ENCODE measurements at regions of chr10 and their contacts with region 1.

Region 1: GRCh38 chr10:3197348-3198003 is 24.9 kb upstream of the PITRM1 start:
- H3K4me3 ChIP-seq: peak overlapping the region; percentile 27
- H3K27ac ChIP-seq: peak overlapping the region; percentile 74
- H3K4me1 ChIP-seq: peaks cover 6% of the 10 kb centered on the region; the same call in 1 of the 2 replicates
- CTCF ChIP-seq: peak; percentile 87

Region 2: DNA sequence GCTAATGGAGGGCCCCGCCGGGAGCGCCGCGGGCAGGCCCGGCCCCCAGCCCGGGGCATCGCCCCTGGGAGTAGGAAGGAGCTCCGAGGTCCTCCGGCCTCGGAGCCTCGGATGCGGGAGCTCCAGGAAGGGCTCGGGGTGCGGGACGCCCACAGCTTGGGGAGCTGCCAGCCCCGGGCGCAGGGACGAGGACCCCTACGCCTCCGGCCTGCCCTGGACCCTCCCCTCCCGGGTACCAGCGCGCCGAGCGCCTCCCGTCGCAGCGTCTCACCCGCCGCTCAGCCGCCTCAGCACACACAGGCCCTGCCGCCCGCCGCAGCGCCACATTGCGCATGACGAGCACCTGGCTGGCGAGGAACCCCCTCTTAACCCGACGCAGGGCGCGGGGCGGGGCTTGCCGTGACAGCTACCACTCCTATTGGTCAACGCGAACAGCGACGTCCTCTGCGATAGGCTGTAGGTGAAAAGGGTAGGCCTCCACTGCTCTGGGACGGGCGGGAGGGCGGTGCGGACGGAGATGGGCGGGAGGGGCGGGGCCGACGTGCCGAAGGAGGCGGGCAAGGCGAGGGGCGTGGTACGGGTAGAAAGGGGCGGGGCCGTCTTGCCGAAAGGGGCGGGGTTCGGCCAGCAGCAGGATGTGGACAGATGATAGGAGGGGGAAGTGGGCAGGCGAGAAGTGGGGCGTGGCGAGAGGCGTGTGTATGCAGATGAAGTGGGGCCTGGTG is 24.9 kb before region 1 on chr10 and contains the start of gene PITRM1:
- CTCF ChIA-PET with region 1: interaction called, 4 read pairs
- POLR2A ChIA-PET with region 1: interaction called, 10 read pairs
- H3K4me3 ChIP-seq: peak within 1 kb of the TSS; percentile 77
- H3K27ac ChIP-seq: peak within 1 kb of the TSS; percentile 75
- H3K4me1 ChIP-seq: no peaks in the 10 kb centered on the region
- CTCF ChIP-seq: peak; percentile 60; the same call in 1 of the 2 replicates

Region 3: GRCh38 chr10:3226960-3227744 is 29.7 kb after region 1 on chr10:
- CTCF ChIA-PET with region 1: interaction called, 5 read pairs
- POLR2A ChIA-PET with region 1: interaction called, 13 read pairs
- H3K4me3 ChIP-seq: no peak overlapping the region
- H3K27ac ChIP-seq: no peak overlapping the region; the same call in 1 of the 2 replicates
- H3K4me1 ChIP-seq: peaks cover 9% of the 10 kb centered on the region
- CTCF ChIP-seq: no peak

Region 4: GRCh38 chr10:3239066-3239919 is 41.8 kb after region 1 on chr10:
- CTCF ChIA-PET with region 1: interaction called, 11 read pairs
- POLR2A ChIA-PET with region 1: no interaction called
- H3K4me3 ChIP-seq: no peak overlapping the region
- H3K27ac ChIP-seq: no peak overlapping the region
- H3K4me1 ChIP-seq: no peaks in the 10 kb centered on the region
- CTCF ChIP-seq: no peak; the same call in 1 of the 2 replicates

Region 5: DNA sequence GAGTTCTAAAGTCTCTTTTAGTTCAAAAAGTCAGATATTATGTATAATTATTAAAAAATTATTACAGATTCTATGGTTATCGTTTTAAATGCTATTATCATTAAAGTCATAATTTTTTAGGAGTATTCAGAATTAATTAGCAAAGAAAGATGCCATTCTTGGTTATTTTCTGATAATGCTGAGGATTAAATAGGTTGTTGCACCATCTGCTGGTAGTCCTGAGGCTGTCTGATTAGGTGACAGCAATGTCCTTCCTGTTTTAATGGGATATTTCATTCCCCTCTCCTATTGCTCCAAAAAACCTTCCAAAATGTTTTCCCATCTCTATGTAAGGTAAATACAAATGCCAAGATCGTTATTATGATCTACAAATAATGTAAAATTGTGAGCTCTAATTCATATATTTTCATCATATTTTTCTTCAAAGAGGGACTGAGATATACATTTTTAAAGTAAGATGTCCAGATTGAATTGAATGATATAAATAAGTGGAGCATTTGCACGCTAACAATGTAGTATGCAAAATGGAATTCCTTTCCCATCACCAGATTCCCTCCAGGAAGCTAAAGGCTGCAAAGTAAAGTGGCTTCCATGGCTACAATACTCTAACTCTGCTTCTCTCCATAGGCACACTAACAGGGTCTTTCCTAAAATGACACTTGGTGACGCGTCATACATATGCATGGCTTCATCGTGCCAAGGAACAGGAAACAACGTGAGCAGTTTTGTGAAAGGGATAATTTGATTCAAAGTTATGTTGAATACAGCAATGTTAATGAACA is 1569.7 kb after region 1 on chr10:
- CTCF ChIA-PET with region 1: interaction called, 14 read pairs
- POLR2A ChIA-PET with region 1: no interaction called
- H3K4me3 ChIP-seq: no peak overlapping the region
- H3K27ac ChIP-seq: no peak overlapping the region
- H3K4me1 ChIP-seq: 0 out of 2 replicates have a peak, but pooled peaks cover 5% of the 10 kb centered on the region
- CTCF ChIP-seq: 0 out of 2 replicates have a peak, but pooled peaks have one; percentile 13